ENCODE measurements at regions of chr4 and their contacts with region 1.

Region 1: GRCh38 chr4:156968479-156968984 is 3.1 kb downstream of the PDGFC start:
- DNase-seq: peak; percentile 73 to 79
- H3K4me3 ChIP-seq: peak overlapping the region; percentile 74 to 89
- H3K27ac ChIP-seq: peak overlapping the region; percentile 98 to 99
- H3K4me1 ChIP-seq: peaks cover 0 to 64% (median 11%) of the 10 kb centered on the region in 4 donors
- H3K27me3 ChIP-seq: no peaks in the 10 kb centered on the region
- CTCF ChIP-seq: peak; percentile 80 to 87

Region 2: GRCh38 chr4:156790866-156791265 is 177.7 kb before region 1 on chr4:
- intact Hi-C with region 1: no loop called
- DNase-seq: no peak
- H3K4me3 ChIP-seq: no peak overlapping the region
- H3K27ac ChIP-seq: no peak overlapping the region
- H3K4me1 ChIP-seq: peaks cover 0 to 24% (median 4%) of the 10 kb centered on the region in 4 donors
- H3K27me3 ChIP-seq: no peaks in the 10 kb centered on the region
- CTCF ChIP-seq: no peak

Region 3: GRCh38 chr4:156815717-156816359 is 152.7 kb before region 1 on chr4:
- intact Hi-C with region 1: no loop called
- DNase-seq: no peak
- H3K4me3 ChIP-seq: no peak overlapping the region
- H3K27ac ChIP-seq: no peak overlapping the region
- H3K4me1 ChIP-seq: peaks cover 0 to 13% (median 2%) of the 10 kb centered on the region in 4 donors
- H3K27me3 ChIP-seq: no peaks in the 10 kb centered on the region
- CTCF ChIP-seq: no peak

Region 4: GRCh38 chr4:157045507-157046127 is 77.1 kb after region 1 on chr4:
- intact Hi-C with region 1: loop called (anchors 10 kb)
- DNase-seq: no peak
- H3K4me3 ChIP-seq: no peak overlapping the region
- H3K27ac ChIP-seq: no peak overlapping the region
- H3K4me1 ChIP-seq: peaks cover 0 to 3% (median 0%) of the 10 kb centered on the region in 4 donors
- H3K27me3 ChIP-seq: no peaks in the 10 kb centered on the region
- CTCF ChIP-seq: peak; percentile 73 to 82

Region 5: DNA sequence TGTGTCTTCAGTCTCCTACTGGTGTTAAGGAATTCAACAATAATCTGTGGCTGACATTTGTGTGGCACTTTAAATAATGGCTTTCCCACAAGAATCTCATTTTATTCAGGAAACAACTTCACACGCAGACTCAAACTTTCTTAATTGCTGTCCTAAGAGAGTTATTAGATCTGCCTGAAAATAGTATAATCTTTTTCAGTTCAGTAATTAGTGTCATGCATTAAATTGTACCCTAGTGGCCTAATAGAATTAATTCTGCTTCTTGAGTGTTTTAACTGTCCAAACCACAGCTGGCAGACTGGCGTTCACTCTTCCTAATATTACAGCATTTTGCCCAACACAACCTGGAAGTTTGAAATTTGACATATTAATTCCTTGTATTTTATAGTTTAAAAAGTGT is 359.1 kb after region 1 on chr4:
- intact Hi-C with region 1: no loop called
- DNase-seq: no peak
- H3K4me3 ChIP-seq: no peak overlapping the region
- H3K27ac ChIP-seq: no peak overlapping the region
- H3K4me1 ChIP-seq: no peaks in the 10 kb centered on the region
- H3K27me3 ChIP-seq: no peaks in the 10 kb centered on the region
- CTCF ChIP-seq: no peak